ENCODE measurements at regions of chr5 and their contacts with region 1.

Region 1: GRCh38 chr5:69093771-69094482 is at the start of gene SLC30A5:
- DNase-seq: peak; percentile 99 to 100
- H3K4me3 ChIP-seq: peak within 1 kb of the TSS; percentile 92
- H3K4me3 Mint-ChIP-seq: peak within 1 kb of the TSS; percentile 88
- H3K27ac Mint-ChIP-seq: peak within 1 kb of the TSS; percentile 91
- H3K4me1 ChIP-seq: peaks cover 13% of the 10 kb centered on the region; the same call in 1 of the 2 replicates
- H3K4me1 Mint-ChIP-seq: no peaks in the 10 kb centered on the region
- H3K27me3 ChIP-seq: no peaks in the 10 kb centered on the region
- H3K27me3 Mint-ChIP-seq: no peaks in the 10 kb centered on the region
- CTCF ChIP-seq: peak; percentile 89 to 92
- total RNA-seq, gene SLC30A5: 61.7 and 64.5 TPM in 2 replicates

Region 2: GRCh38 chr5:68252673-68253623 is 841.0 kb before region 1 on chr5:
- CTCF ChIA-PET with region 1: no interaction called
- POLR2A ChIA-PET with region 1: no interaction called
- intact Hi-C with region 1: no loop called
- DNase-seq: peak; percentile 66 to 74
- H3K4me3 ChIP-seq: no peak overlapping the region
- H3K4me3 Mint-ChIP-seq: no peak overlapping the region
- H3K27ac Mint-ChIP-seq: no peak overlapping the region
- H3K4me1 ChIP-seq: 0 out of 2 replicates have a peak, but pooled peaks cover 8% of the 10 kb centered on the region
- H3K4me1 Mint-ChIP-seq: peaks cover 34% of the 10 kb centered on the region
- H3K27me3 ChIP-seq: no peaks in the 10 kb centered on the region
- H3K27me3 Mint-ChIP-seq: no peaks in the 10 kb centered on the region
- CTCF ChIP-seq: peak; percentile 82 to 87

Region 3: DNA sequence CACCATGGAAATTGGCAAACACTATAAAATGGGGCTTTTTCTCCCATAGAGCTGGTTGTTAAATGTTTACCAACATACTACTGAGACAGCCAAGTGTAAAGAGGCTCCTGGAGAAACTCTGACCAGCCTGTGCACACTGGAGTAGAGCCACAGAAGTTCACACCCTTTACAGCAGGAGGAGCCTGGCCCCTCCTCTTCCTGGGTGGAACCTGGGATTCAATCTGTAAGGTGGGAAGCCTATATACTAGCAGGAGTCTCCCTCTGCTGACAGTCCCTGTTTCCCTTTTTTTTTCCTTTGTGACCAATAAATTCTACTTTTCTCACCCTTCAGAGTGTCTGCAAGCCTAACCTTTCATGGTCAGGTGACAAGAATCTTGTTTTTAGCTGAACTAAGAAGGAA is 10.5 kb before region 1 on chr5:
- CTCF ChIA-PET with region 1: interaction called, 11 read pairs
- POLR2A ChIA-PET with region 1: interaction called, 9 read pairs
- intact Hi-C with region 1: no loop called
- DNase-seq: peak; percentile 74 to 76
- H3K4me3 ChIP-seq: no peak overlapping the region
- H3K4me3 Mint-ChIP-seq: no peak overlapping the region
- H3K27ac Mint-ChIP-seq: no peak overlapping the region
- H3K4me1 ChIP-seq: peaks cover 11% of the 10 kb centered on the region
- H3K4me1 Mint-ChIP-seq: peaks cover 23% of the 10 kb centered on the region
- H3K27me3 ChIP-seq: no peaks in the 10 kb centered on the region
- H3K27me3 Mint-ChIP-seq: no peaks in the 10 kb centered on the region
- CTCF ChIP-seq: peak; percentile 41 to 63

Region 4: DNA sequence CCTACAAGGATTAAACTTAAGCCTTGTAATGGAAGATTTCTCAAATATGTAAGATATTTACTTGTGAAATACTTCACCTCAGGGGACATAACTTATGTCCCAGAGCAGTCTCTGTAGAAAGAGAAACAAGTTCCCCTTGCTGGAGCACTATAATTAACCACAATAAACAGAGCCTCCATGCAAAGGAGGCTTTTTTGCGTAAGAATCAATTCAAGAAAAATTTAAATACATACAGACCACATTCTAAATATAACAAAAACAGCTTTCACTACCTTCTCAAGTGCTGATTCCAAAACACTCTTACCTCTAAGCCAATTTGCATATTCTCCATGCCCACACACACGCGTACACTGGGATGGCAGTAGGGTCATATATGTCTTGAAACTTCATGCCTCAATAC is 42.4 kb after region 1 on chr5:
- CTCF ChIA-PET with region 1: no interaction called
- POLR2A ChIA-PET with region 1: no interaction called
- intact Hi-C with region 1: no loop called
- DNase-seq: no peak
- H3K4me3 ChIP-seq: no peak overlapping the region
- H3K4me3 Mint-ChIP-seq: no peak overlapping the region
- H3K27ac Mint-ChIP-seq: peak overlapping the region; percentile 53
- H3K4me1 ChIP-seq: peaks cover 6% of the 10 kb centered on the region; the same call in 1 of the 2 replicates
- H3K4me1 Mint-ChIP-seq: peaks cover 10% of the 10 kb centered on the region
- H3K27me3 ChIP-seq: no peaks in the 10 kb centered on the region
- H3K27me3 Mint-ChIP-seq: no peaks in the 10 kb centered on the region
- CTCF ChIP-seq: no peak

Region 5: GRCh38 chr5:69189162-69190086 is 95.5 kb after region 1 on chr5 and contains the start of gene CENPH:
- CTCF ChIA-PET with region 1: interaction called, 10 read pairs
- POLR2A ChIA-PET with region 1: interaction called, 3 read pairs
- intact Hi-C with region 1: loop called (anchors 1 kb)
- DNase-seq: peak; percentile 93 to 96
- H3K4me3 ChIP-seq: peak within 1 kb of the TSS; percentile 87
- H3K4me3 Mint-ChIP-seq: peak within 1 kb of the TSS; percentile 96
- H3K27ac Mint-ChIP-seq: peak within 1 kb of the TSS; percentile 100
- H3K4me1 ChIP-seq: no peaks in the 10 kb centered on the region
- H3K4me1 Mint-ChIP-seq: no peaks in the 10 kb centered on the region
- H3K27me3 ChIP-seq: no peaks in the 10 kb centered on the region
- H3K27me3 Mint-ChIP-seq: no peaks in the 10 kb centered on the region
- CTCF ChIP-seq: no peak
- total RNA-seq, gene CENPH: 30.2 and 32.4 TPM in 2 replicates

Region 6: GRCh38 chr5:69293895-69294294 is 200.0 kb after region 1 on chr5:
- CTCF ChIA-PET with region 1: no interaction called
- POLR2A ChIA-PET with region 1: interaction called, 10 read pairs
- intact Hi-C with region 1: no loop called
- DNase-seq: peak; percentile 57 to 69
- H3K4me3 ChIP-seq: no peak overlapping the region
- H3K4me3 Mint-ChIP-seq: peak overlapping the region; percentile 27
- H3K27ac Mint-ChIP-seq: no peak overlapping the region
- H3K4me1 ChIP-seq: peaks cover 48% of the 10 kb centered on the region
- H3K4me1 Mint-ChIP-seq: peaks cover 30% of the 10 kb centered on the region
- H3K27me3 ChIP-seq: no peaks in the 10 kb centered on the region
- H3K27me3 Mint-ChIP-seq: no peaks in the 10 kb centered on the region
- CTCF ChIP-seq: no peak

Region 7: DNA sequence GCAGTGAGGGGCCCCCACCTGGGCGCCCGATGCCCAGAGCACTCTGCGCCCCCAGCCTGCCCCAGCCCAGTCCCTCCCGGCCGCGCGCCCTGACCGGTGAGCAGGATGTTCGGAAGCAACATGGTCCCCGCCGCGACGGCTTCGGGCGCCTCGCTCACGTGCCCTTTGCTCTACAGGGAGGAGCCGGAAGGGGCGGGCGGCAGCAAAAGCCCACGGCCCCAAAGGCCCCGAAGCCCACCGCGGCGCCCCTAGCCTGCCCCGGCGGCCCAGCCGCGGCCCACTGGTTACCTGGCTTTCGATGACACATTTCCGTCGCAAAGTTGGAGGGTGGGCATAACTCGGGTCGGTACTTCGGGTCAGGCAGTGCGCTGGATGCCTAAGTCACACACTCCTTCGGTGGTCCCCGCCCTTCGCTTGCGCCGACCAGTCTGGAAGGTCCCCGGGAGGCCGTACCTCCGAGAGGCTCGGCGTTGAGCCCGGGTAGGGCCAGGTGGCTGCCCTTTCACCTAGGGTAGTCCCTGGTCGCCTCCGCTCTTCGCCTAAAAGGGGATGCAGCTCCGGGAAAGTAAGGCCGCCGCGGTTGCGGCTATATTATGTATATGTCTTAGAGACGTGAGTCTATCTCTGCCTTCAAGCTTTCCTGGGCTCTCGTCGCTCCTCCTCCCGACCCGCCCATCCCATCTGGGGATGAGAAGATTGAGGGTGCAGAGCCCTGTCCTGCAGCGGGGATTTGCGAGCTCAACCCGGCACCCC is 275.6 kb after region 1 on chr5 and contains the starts of genes AK6, RAD17 and TAF9:
- CTCF ChIA-PET with region 1: no interaction called
- POLR2A ChIA-PET with region 1: no interaction called
- intact Hi-C with region 1: loop called (anchors 1 kb)
- DNase-seq: peak; percentile 94 to 95
- H3K4me3 ChIP-seq: peak within 1 kb of the TSS; percentile 67
- H3K4me3 Mint-ChIP-seq: peak within 1 kb of the TSS; percentile 90
- H3K27ac Mint-ChIP-seq: peak within 1 kb of the TSS; percentile 99
- H3K4me1 ChIP-seq: peaks cover 15% of the 10 kb centered on the region
- H3K4me1 Mint-ChIP-seq: peaks cover 8% of the 10 kb centered on the region
- H3K27me3 ChIP-seq: no peaks in the 10 kb centered on the region
- H3K27me3 Mint-ChIP-seq: no peaks in the 10 kb centered on the region
- CTCF ChIP-seq: no peak
- total RNA-seq, gene AK6: 66.8 and 75.1 TPM in 2 replicates
- total RNA-seq, gene RAD17: 33.8 and 36.0 TPM in 2 replicates
- total RNA-seq, gene TAF9: 92.5 and 101 TPM in 2 replicates

Region 8: GRCh38 chr5:69492391-69492922 is 398.5 kb after region 1 on chr5 and contains the start of gene OCLN:
- CTCF ChIA-PET with region 1: no interaction called
- POLR2A ChIA-PET with region 1: no interaction called
- intact Hi-C with region 1: loop called (anchors 10 kb)
- DNase-seq: peak; percentile 96
- H3K4me3 ChIP-seq: peak within 1 kb of the TSS; percentile 99
- H3K4me3 Mint-ChIP-seq: peak within 1 kb of the TSS; percentile 100
- H3K27ac Mint-ChIP-seq: peak within 1 kb of the TSS; percentile 100
- H3K4me1 ChIP-seq: peaks cover 34% of the 10 kb centered on the region
- H3K4me1 Mint-ChIP-seq: peaks cover 43% of the 10 kb centered on the region
- H3K27me3 ChIP-seq: no peaks in the 10 kb centered on the region
- H3K27me3 Mint-ChIP-seq: no peaks in the 10 kb centered on the region
- CTCF ChIP-seq: peak in 1 of 2 experiments; percentile 2
- total RNA-seq, gene OCLN: 174 and 184 TPM in 2 replicates